Transverse colon (tissue), 4 donors: ENCODE measurements at regions of chr6 and their contacts with region 1.

Region 1: DNA sequence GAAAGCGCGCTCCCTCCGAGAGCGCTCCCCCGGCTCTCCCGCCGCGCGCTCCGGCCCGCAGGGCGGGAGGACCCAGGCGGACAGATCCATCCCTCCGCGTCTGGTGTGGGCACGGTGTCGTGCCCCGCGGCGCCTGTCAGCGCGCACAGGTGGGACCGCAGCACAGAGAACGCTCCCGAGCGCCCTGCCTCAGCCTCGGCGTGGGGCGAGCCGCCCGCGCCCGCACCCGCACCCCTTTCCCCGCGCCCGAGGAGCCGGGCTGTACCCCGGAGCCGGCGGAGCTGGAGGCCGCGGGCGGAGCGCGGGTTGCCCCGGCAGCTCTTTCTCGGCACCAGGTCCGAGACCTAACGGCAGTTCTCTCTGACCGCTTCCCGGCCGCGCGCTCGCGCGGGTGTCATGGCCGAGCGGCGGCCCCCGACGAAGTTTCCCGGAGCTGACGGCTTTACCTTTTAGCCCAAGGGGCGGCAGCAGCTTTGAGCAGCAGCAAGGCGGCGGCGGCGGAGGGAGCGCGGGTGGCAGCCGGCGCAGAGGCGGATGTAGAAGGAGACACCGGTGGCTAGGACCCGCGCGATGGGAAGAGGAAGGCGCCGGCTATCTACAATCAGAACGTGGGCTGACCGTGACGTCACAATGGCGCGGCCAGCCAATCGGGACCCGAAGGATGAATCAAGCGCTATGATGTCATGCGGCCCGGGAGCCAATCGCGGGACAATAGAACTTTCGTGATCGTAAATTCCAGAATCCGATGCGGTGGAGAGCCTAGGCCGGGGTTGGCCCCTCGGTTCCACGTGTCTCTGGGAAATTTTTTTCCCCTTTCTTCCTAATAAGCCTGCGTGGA is at the start of gene ELOVL5:
- DNase-seq: peak; percentile 94
- H3K4me3 ChIP-seq: peak within 1 kb of the TSS; percentile 80 to 94 (median 86)
- H3K27ac ChIP-seq: peak within 1 kb of the TSS; percentile 97 to 99 (median 98)
- H3K4me1 ChIP-seq: peaks cover 0 to 35% (median 18%) of the 10 kb centered on the region in 4 donors
- H3K27me3 ChIP-seq: no peaks in the 10 kb centered on the region
- CTCF ChIP-seq: no peak
- EP300 ChIP-seq: no peak
- POLR2A ChIP-seq: peak; percentile 78
- total RNA-seq, gene ELOVL5: 14.3 to 63.1 (median 29.2) TPM

Region 2: GRCh38 chr6:53294095-53294494 is 54.5 kb before region 1 on chr6:
- in situ Hi-C with region 1: no loop called
- intact Hi-C with region 1: loop called (anchors 10 kb)
- DNase-seq: no peak
- H3K4me3 ChIP-seq: no peak overlapping the region
- H3K27ac ChIP-seq: no peak overlapping the region
- H3K4me1 ChIP-seq: no peaks in the 10 kb centered on the region
- H3K27me3 ChIP-seq: no peaks in the 10 kb centered on the region
- CTCF ChIP-seq: peak in 2 of 5 experiments; percentile 17 to 61
- EP300 ChIP-seq: no peak
- POLR2A ChIP-seq: no peak